H1 (cell line): ENCODE measurements at regions of chr10 and their contacts with region 1.

Region 1: DNA sequence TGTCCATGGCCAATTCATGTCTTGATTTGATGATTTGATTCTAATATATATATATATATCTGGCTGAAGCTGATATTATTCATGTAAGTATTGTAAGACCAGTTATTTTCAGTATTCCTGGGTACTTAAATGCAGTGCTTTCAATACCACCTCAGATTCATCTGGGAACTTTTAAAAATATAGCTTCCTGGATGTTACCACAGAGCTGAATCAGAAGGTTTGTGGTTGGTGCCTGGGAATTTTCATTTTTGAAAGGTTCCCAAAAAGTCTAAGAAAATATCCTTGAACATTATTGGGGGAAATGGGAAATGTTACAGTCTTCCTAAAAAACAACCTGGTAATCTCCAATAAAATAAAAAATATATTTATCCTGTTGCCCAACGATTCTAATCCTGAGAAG is 10.7 kb upstream of the PPP3CB start:
- DNase-seq: no peak
- H3K4me3 ChIP-seq: peak overlapping the region in 1 of 4 experiments; percentile 34; a peak in 2 of 8 replicates
- H3K27ac ChIP-seq: no peak overlapping the region
- H3K4me1 ChIP-seq: no peaks in the 10 kb centered on the region; a peak in 1 of 7 replicates
- H3K27me3 ChIP-seq: no peaks in the 10 kb centered on the region
- CTCF ChIP-seq: no peak
- EP300 ChIP-seq: no peak
- POLR2A ChIP-seq: no peak
- RAD21 ChIP-seq: no peak

Region 2: DNA sequence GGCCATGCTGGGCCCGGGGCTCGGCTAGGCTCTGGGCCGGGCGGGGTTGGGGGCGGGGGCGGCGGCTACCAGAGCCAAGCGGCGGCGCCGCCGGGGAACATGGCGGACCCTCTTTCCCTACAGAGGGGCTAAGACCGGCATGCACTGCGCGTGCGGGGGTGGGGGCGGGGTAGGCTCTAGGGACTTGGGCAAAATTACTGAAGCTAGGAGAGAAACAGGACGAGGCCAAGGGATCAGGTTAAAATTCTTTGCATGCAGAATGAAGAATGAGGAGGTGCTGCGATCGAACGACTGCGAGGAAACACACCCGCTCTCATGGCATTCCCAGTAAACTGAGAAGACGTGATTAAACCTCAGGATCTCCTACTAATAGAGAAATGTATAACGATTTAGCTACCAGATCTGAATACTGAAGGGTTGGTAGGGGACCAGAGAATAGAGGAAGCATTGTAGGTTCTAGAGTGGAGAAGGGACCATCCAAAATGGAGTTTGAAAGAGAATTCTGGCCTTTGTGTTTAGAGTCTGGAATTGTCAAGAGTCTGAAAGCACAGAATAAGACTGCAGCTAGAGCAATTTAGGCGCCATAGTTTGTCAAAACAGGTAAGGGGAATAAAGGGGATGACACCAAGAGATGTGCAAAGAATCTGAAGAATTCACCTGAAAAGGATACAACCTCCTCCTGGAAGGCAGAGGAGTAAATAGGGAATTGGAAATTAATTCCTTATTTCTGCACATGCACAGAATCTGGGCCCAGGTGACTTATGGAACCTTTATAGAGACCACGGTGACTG is 10.4 kb before region 1 on chr10 and contains the start of gene PPP3CB:
- CTCF ChIA-PET with region 1: no interaction called
- POLR2A ChIA-PET with region 1: interaction called, 11 read pairs
- DNase-seq: peak; percentile 76 to 87
- H3K4me3 ChIP-seq: peak within 1 kb of the TSS; percentile 70 to 97 (median 84)
- H3K27ac ChIP-seq: peak within 1 kb of the TSS; percentile 71
- H3K4me1 ChIP-seq: peaks cover 4 to 5% (median 4%) of the 10 kb centered on the region in 4 experiments; a peak in 6 of 7 replicates
- H3K27me3 ChIP-seq: no peaks in the 10 kb centered on the region
- CTCF ChIP-seq: no peak
- EP300 ChIP-seq: 0 out of 3 replicates have a peak, but pooled peaks of 1 of the 2 experiments have one; percentile 32
- POLR2A ChIP-seq: peak in 1 of 2 experiments; percentile 21; a peak in 1 of 3 replicates
- RAD21 ChIP-seq: no peak
- total RNA-seq, gene PPP3CB: 32.3 and 36.3 TPM in 2 replicates